ENCODE measurements at regions of chr10 and their contacts with region 1.

Region 1: DNA sequence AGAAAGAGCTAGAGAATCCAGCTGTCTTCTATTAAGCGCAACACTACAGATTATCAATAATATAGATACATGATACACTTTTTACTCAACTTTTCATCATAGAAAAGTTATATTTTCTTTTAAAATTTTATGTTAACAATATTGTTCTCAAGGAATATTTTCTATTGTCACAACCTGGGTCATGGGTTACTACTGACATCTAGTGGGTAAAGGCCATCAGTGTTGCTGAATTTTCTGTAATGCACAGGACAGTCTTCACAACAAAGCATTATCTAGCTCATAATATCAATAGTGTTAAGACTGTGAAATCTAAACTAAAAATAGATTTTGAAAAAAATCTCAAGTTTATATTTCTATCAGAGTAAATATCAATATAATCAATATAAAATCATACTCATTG is 209.8 kb downstream of the ZNF33B start:
- DNase-seq: peak; percentile 66
- ATAC-seq: peak; percentile 55; the same call in 1 of the 2 replicates
- H3K4me3 ChIP-seq: no peak overlapping the region
- H3K27ac ChIP-seq: no peak overlapping the region
- H3K4me1 ChIP-seq: no peaks in the 10 kb centered on the region
- H3K27me3 ChIP-seq: peaks cover 32% of the 10 kb centered on the region
- CTCF ChIP-seq: peak; percentile 72

Region 2: GRCh38 chr10:42177077-42177792 is 251.3 kb before region 1 on chr10:
- CTCF ChIA-PET with region 1: no interaction called
- POLR2A ChIA-PET with region 1: no interaction called
- intact Hi-C with region 1: loop called (anchors 2 kb)
- DNase-seq: no peak
- ATAC-seq: no peak
- H3K4me3 ChIP-seq: no peak overlapping the region
- H3K27ac ChIP-seq: no peak overlapping the region
- H3K4me1 ChIP-seq: no peaks in the 10 kb centered on the region; the same call in 1 of the 2 replicates
- H3K27me3 ChIP-seq: peaks cover 35% of the 10 kb centered on the region
- CTCF ChIP-seq: no peak

Region 3: GRCh38 chr10:42367532-42368230 is 60.9 kb before region 1 on chr10:
- CTCF ChIA-PET with region 1: no interaction called
- POLR2A ChIA-PET with region 1: no interaction called
- intact Hi-C with region 1: loop called (anchors 10 kb)
- DNase-seq: peak; percentile 98
- ATAC-seq: peak; percentile 100
- H3K4me3 ChIP-seq: peak overlapping the region; percentile 84
- H3K27ac ChIP-seq: no peak overlapping the region
- H3K4me1 ChIP-seq: no peaks in the 10 kb centered on the region
- H3K27me3 ChIP-seq: no peaks in the 10 kb centered on the region
- CTCF ChIP-seq: no peak

Region 4: GRCh38 chr10:42583828-42584227 is 155.3 kb after region 1 on chr10:
- CTCF ChIA-PET with region 1: no interaction called
- POLR2A ChIA-PET with region 1: no interaction called
- intact Hi-C with region 1: no loop called
- DNase-seq: no peak
- ATAC-seq: no peak
- H3K4me3 ChIP-seq: no peak overlapping the region
- H3K27ac ChIP-seq: no peak overlapping the region
- H3K4me1 ChIP-seq: no peaks in the 10 kb centered on the region
- H3K27me3 ChIP-seq: no peaks in the 10 kb centered on the region
- CTCF ChIP-seq: no peak